ENCODE measurements at regions of chr12 and their contacts with region 1.

Region 1: GRCh38 chr12:55874443-55874842 is 31.7 kb upstream of the MMP19 start:
- DNase-seq: no peak
- ATAC-seq: no peak
- H3K4me3 ChIP-seq: no peak overlapping the region
- H3K27ac ChIP-seq: no peak overlapping the region
- H3K4me1 ChIP-seq: no peaks in the 10 kb centered on the region
- H3K27me3 ChIP-seq: no peaks in the 10 kb centered on the region
- CTCF ChIP-seq: no peak

Region 2: DNA sequence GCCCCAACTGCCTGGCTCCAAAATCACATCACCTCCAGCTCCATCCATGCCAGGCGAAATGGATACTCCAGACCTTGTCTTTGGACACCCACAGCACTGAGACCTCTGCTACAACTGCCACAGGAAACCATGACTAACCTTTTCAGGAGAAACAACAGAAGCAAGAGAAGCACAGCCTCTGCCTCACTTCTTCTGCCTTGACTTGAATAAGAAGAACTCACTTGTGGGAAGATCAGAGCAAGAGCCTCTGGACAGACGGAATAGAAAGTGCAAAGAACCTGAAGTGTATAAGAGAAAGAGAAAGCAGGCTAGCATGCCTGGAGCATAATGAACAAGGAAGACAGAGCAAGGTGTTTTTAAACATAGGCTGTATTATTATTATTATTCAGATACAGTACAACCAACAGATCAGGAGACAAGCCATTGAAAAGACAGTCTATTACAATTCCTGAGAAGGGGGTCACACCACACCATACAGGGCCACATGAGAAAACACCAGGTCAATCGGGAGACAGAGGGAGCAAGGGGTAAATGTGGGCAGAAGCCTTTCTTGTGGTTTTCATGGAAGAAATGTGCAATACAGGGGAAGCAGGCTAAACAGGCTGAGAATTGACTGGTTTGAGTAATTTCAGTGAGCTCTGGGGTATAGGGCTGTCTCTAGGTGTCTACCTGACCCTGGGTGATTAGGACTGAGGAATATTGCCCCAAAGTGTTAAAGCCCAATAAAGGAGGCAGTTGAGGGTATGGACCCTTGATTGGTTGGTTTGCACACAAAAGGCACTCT is 245.2 kb before region 1 on chr12:
- CTCF ChIA-PET with region 1: no interaction called
- POLR2A ChIA-PET with region 1: no interaction called
- in situ Hi-C with region 1: no loop called
- intact Hi-C with region 1: no loop called
- DNase-seq: no peak
- ATAC-seq: no peak
- H3K4me3 ChIP-seq: no peak overlapping the region
- H3K27ac ChIP-seq: no peak overlapping the region
- H3K4me1 ChIP-seq: no peaks in the 10 kb centered on the region
- H3K27me3 ChIP-seq: 0 out of 2 replicates have a peak, but pooled peaks cover 2% of the 10 kb centered on the region
- CTCF ChIP-seq: no peak

Region 3: GRCh38 chr12:56230432-56231183 is 356.2 kb after region 1 on chr12:
- CTCF ChIA-PET with region 1: no interaction called
- POLR2A ChIA-PET with region 1: interaction called, 12 read pairs
- in situ Hi-C with region 1: no loop called
- intact Hi-C with region 1: no loop called
- DNase-seq: no peak
- ATAC-seq: peak; percentile 33
- H3K4me3 ChIP-seq: no peak overlapping the region
- H3K27ac ChIP-seq: no peak overlapping the region
- H3K4me1 ChIP-seq: no peaks in the 10 kb centered on the region
- H3K27me3 ChIP-seq: no peaks in the 10 kb centered on the region
- CTCF ChIP-seq: no peak

Measured in Panc1 (cell line).